ENCODE measurements at regions of chr10 and their contacts with region 1.

Region 1: GRCh38 chr10:96513698-96514561 is at the start of gene TLL2:
- DNase-seq: peak; percentile 93
- ATAC-seq: peak; percentile 96
- total RNA-seq, gene TLL2: 10.8 TPM

Region 2: DNA sequence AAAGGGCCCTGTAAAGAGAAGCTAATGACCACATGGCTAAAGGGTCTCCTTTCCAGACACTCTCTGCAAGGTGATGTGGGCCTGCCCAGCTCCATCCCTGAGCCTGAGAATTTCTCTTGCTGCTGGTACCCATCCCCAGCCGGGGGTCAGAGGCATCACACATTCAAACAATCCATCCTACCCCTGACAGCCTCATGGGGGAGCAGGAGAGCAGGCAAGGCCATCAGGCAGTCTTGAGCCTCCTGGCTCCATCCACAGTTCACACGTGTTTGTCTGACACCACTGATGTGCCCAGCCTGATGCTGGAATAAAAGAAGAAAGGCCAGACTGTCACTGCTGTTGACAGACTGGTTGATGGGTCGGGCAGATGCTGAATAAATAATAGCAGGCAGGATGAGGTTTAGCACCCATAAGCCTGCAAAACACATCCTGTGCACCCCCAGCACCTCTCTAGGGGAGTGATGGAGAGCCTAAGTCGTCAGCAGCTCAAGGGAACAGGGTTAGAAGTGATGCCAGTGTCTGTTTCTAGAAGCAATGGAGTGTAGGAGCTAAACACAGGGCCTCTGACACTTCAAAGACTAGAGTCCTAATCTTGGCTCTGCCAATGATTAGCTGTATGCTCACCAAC is 43.7 kb before region 1 on chr10:
- intact Hi-C with region 1: loop called (anchors 5 kb)
- DNase-seq: no peak
- ATAC-seq: peak; percentile 68

Region 3: GRCh38 chr10:96743988-96744585 is 230.2 kb after region 1 on chr10:
- intact Hi-C with region 1: loop called (anchors 5 kb)
- DNase-seq: no peak
- ATAC-seq: peak; percentile 57